ENCODE measurements at regions of chr10 and their contacts with region 1.

Region 1: GRCh38 chr10:43689955-43690771 is 41.5 kb upstream of the ZNF32 start:
- DNase-seq: peak; percentile 82 to 99 (median 90)
- ATAC-seq: peak; percentile 94 to 98 (median 94)
- H3K4me3 ChIP-seq: peak overlapping the region; percentile 26 to 53 (median 42)
- H3K27ac ChIP-seq: peak overlapping the region; percentile 66 to 82 (median 70)
- H3K4me1 ChIP-seq: peaks cover 5 to 16% (median 8%) of the 10 kb centered on the region in 3 donors
- H3K27me3 ChIP-seq: no peaks in the 10 kb centered on the region
- CTCF ChIP-seq: peak; percentile 84 to 94 (median 92)

Region 2: DNA sequence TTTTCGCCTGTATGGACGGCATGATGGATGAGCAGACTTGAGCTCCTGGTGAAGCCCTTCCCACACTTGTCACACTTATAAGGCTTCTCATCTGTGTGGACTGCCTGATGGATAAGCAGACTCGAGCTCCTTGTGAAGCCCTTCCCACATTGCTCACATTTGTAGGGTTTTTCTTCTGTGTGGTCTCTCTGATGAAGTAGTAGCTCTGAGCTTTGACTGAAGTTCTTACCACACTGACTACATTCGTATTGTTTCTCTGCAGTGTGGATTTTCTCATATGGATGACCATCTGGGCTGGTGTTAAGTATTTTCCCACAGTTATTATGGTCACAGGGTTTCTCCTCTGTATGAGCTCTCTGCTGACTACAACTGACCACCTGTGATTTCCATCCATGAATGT is 132.9 kb before region 1 on chr10:
- intact Hi-C with region 1: no loop called
- DNase-seq: no peak
- ATAC-seq: no peak
- H3K4me3 ChIP-seq: no peak overlapping the region
- H3K27ac ChIP-seq: no peak overlapping the region
- H3K4me1 ChIP-seq: no peaks in the 10 kb centered on the region
- H3K27me3 ChIP-seq: no peaks in the 10 kb centered on the region
- CTCF ChIP-seq: no peak

Region 3: GRCh38 chr10:43808136-43808535 is 118.0 kb after region 1 on chr10:
- intact Hi-C with region 1: no loop called
- DNase-seq: no peak
- ATAC-seq: no peak
- H3K4me3 ChIP-seq: no peak overlapping the region
- H3K27ac ChIP-seq: no peak overlapping the region
- H3K4me1 ChIP-seq: no peaks in the 10 kb centered on the region
- H3K27me3 ChIP-seq: no peaks in the 10 kb centered on the region
- CTCF ChIP-seq: no peak

Region 4: DNA sequence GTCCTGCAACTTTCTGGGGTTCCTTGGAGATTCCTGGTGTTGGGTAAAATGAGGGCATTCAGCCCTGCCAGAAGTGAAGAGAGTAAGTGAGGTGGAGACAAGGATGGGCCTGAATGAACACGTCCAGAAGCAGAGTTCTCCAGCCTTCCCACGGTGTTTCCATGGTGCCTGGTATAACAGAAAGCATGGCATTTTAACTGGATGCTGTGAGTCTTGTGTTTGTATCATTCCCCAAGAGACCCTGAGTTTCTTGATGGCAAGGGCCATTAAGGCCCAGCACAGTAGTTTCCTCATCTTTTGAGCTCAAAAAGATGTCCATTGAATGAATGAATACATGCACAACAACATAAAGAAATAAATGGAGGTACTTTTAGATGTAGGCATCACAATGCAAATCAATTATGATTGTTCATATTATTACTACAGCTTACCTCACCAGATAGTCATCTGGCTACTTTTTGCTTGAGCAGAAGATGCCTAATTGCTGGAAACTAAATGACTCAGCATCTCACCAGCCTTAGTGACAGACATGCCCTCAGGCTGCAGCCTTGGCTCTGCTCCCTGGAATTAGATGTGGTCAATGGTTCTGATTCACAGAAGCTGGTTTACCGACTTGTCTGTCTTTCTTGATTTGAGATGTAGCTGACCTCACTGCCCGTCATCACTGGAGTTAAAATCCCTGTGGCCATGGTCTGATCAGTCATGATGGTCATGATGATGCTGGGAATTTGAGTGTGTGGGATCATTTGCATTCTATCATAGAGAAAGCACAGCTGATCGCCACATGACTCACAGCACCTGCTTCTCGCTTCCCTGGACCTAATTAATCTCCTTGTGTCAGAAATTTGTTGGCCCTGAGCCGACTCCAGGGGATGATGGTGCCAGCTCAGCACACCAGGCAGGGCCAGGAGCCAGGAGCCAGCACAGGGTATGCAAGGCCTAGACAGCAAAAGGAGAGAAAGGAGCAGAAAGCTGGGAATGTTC is 610.8 kb after region 1 on chr10:
- intact Hi-C with region 1: loop called in 1 of 3 experiments (anchors 10 kb)
- DNase-seq: peak; percentile 86 to 96 (median 94)
- ATAC-seq: peak; percentile 95 to 98 (median 97)
- H3K4me3 ChIP-seq: no peak overlapping the region
- H3K27ac ChIP-seq: peak overlapping the region in 3 of 4 donors; percentile 3 to 69 (median 56)
- H3K4me1 ChIP-seq: peaks cover 0 to 7% (median 5%) of the 10 kb centered on the region in 3 donors
- H3K27me3 ChIP-seq: no peaks in the 10 kb centered on the region
- CTCF ChIP-seq: no peak

Region 5: GRCh38 chr10:44310762-44311562 is 620.8 kb after region 1 on chr10:
- intact Hi-C with region 1: loop called in 2 of 3 experiments (anchors 10 kb)
- DNase-seq: peak; percentile 83 to 98 (median 92)
- ATAC-seq: peak; percentile 99 to 100 (median 99)
- H3K4me3 ChIP-seq: peak overlapping the region in 3 of 4 donors; percentile 29 to 48 (median 34)
- H3K27ac ChIP-seq: no peak overlapping the region
- H3K4me1 ChIP-seq: peaks cover 0 to 5% (median 0%) of the 10 kb centered on the region in 3 donors
- H3K27me3 ChIP-seq: no peaks in the 10 kb centered on the region
- CTCF ChIP-seq: peak; percentile 91 to 97 (median 94)

Measured in pancreas (tissue), 10 donors.